ENCODE measurements at regions of chr14 and their contacts with region 1.

Region 1: GRCh38 chr14:91649930-91650329 is 82.0 kb downstream of the CATSPERB start:
- DNase-seq: peak in 2 of 4 experiments; percentile 12
- ATAC-seq: no peak
- H3K4me3 ChIP-seq: no peak overlapping the region
- H3K27ac ChIP-seq: no peak overlapping the region
- H3K4me1 ChIP-seq: no peaks in the 10 kb centered on the region
- H3K27me3 ChIP-seq: no peaks in the 10 kb centered on the region
- CTCF ChIP-seq: peak in 2 of 3 experiments; percentile 34 to 55; a peak in 3 of 6 replicates
- EP300 ChIP-seq: no peak
- POLR2A ChIP-seq: no peak
- RAD21 ChIP-seq: peak; percentile 49 to 70

Region 2: GRCh38 chr14:91858215-91858905 is 208.4 kb after region 1 on chr14:
- CTCF ChIA-PET with region 1: no interaction called
- POLR2A ChIA-PET with region 1: no interaction called
- in situ Hi-C with region 1: no loop called
- intact Hi-C with region 1: loop called (anchors 2 kb)
- DNase-seq: peak; percentile 18 to 56 (median 32)
- ATAC-seq: peak; percentile 90
- H3K4me3 ChIP-seq: no peak overlapping the region
- H3K27ac ChIP-seq: no peak overlapping the region
- H3K4me1 ChIP-seq: peaks cover 0 to 2% of the 10 kb centered on the region in 2 experiments; a peak in 2 of 5 replicates
- H3K27me3 ChIP-seq: no peaks in the 10 kb centered on the region
- CTCF ChIP-seq: peak; percentile 47 to 64 (median 51); a peak in 5 of 6 replicates
- EP300 ChIP-seq: no peak
- POLR2A ChIP-seq: no peak
- RAD21 ChIP-seq: peak; percentile 63 to 80

Region 3: DNA sequence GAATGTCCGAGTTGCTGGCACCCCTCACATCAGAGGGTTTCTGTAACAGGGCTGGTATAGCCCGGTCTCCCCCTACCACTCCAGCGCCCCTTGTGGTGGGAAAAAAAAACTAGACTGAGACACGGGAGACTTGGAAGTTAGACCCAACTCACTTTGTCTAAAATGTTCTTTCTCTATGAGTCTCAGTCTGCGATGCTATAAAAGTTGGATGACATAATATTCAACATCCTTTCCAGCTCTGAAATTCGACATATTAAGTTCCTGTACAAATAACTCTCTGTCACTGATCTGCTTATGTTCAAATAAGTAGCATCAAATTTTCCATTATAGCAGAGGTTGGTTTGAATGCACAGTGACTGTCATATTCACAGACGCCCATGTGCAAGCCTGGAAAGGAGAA is 243.1 kb after region 1 on chr14:
- CTCF ChIA-PET with region 1: no interaction called
- POLR2A ChIA-PET with region 1: no interaction called
- in situ Hi-C with region 1: no loop called
- intact Hi-C with region 1: loop called (anchors 10 kb)
- DNase-seq: peak; percentile 45 to 69 (median 61)
- ATAC-seq: peak; percentile 91
- H3K4me3 ChIP-seq: no peak overlapping the region
- H3K27ac ChIP-seq: no peak overlapping the region
- H3K4me1 ChIP-seq: no peaks in the 10 kb centered on the region
- H3K27me3 ChIP-seq: peaks cover 4 to 22% of the 10 kb centered on the region in 2 experiments
- CTCF ChIP-seq: peak; percentile 52 to 74 (median 53)
- EP300 ChIP-seq: no peak
- POLR2A ChIP-seq: no peak
- RAD21 ChIP-seq: peak in 1 of 2 experiments; percentile 27; a peak in 1 of 4 replicates